Activated CD4-positive, alpha-beta T cell treated with anti-CD3 and anti-CD28 coated beads, Interleukin-2, amount 10 ng/mL, durations not matched to agents 7 days and 5 days (primary cell): ENCODE measurements at regions of chr5 and their contacts with region 1.

Region 1: DNA sequence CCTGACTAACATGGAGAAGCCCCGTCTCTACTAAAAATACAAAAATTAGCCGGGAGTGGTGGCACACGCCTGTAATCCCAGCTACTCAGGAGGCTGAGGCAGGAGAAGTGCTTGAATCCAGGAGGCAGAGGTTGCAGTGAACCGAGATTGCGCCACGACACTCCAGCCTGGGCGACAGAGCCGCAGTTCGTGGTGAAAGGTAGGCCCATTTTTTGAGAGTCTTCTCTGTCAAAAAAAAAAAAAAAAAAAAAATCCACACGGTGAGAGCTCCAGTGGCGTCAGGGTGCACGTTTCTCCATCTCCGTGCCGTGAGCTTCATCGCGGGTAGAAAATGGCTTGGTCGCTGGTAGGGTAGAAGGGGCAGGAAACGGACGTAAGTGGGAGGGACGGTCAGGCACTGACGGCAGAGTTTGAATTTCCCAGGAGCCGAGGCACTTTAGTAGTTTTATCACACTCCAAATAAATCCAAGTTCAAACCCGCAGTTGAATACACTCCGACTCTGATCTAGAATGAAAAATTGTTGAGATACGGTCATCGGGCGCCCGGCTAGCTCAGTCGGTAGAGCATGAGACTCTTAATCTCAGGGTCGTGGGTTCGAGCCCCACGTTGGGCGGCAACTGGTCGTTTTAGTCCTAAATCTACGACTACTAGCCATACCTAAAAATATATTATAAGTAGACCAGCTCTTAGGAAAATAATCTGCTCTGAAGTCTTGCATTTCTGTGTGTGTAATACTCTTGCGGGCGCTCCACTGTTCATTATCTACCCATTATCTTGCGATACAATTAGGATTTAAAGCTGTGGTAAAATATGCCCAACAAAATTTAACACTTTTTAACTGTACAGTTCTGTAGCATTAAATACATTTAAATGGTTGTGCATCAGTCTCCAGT is 2.5 kb upstream of the TRIM7 start:
- DNase-seq: peak; percentile 70
- H3K4me3 Mint-ChIP-seq: peak overlapping the region; percentile 74
- H3K27ac Mint-ChIP-seq: peak overlapping the region; percentile 79
- H3K4me1 Mint-ChIP-seq: peaks cover 34% of the 10 kb centered on the region
- H3K27me3 Mint-ChIP-seq: peaks cover 31% of the 10 kb centered on the region

Region 2: DNA sequence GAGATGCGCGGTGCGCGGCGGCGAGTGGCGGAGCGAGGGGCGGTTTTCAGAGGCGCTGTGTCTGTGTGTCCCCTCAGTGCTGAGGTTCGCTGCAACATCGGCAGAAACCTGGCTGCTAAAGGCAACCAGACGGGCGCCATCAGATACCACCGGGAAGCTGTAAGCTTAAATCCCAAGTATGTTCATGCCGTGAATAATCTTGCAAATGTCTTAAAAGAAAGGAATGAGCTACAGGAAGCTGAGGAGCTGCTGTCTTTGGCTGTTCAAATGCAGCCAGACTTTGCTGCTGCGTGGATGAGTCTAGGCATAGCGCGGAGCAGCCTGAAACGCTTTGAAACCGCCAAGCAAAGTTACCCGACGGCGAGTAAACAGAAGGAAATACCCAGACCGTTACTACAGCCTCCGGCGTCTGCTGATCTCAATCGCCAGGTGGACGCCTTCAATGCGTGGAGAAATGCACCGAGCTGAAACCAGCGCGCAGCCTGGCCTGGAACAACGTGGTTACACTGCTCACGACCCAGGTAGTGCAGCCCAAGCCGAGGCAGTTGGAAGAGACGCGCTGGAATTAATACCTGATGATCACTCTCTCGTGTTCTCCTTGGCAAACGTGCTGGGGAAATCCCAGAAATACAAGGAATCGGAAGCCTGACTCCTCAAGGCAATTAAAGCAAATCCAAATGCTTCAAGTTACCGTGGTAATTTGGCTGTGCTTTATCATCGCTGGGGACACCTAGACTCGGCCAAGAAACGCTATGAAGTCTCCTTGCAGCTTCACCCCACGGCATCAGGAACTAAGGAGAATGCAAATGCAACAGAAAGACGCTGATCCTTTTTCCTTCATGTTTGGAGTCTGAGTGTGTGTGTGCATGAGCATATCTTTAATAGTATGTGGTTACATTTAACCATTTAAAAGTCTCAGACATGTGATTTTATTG is 92.3 kb before region 1 on chr5:
- CTCF ChIA-PET with region 1: no interaction called
- POLR2A ChIA-PET with region 1: no interaction called
- DNase-seq: no peak
- H3K4me3 Mint-ChIP-seq: no peak overlapping the region
- H3K27ac Mint-ChIP-seq: no peak overlapping the region
- H3K4me1 Mint-ChIP-seq: peaks cover 11% of the 10 kb centered on the region
- H3K27me3 Mint-ChIP-seq: peaks cover 52% of the 10 kb centered on the region

Region 3: GRCh38 chr5:181173420-181174342 is 33.8 kb before region 1 on chr5:
- CTCF ChIA-PET with region 1: interaction called, 16 read pairs
- POLR2A ChIA-PET with region 1: no interaction called
- DNase-seq: peak; percentile 75
- H3K4me3 Mint-ChIP-seq: peak overlapping the region; percentile 91
- H3K27ac Mint-ChIP-seq: peak overlapping the region; percentile 98
- H3K4me1 Mint-ChIP-seq: peaks cover 50% of the 10 kb centered on the region
- H3K27me3 Mint-ChIP-seq: peaks cover 37% of the 10 kb centered on the region